ENCODE measurements at regions of chr17 and their contacts with region 1.

Region 1: DNA sequence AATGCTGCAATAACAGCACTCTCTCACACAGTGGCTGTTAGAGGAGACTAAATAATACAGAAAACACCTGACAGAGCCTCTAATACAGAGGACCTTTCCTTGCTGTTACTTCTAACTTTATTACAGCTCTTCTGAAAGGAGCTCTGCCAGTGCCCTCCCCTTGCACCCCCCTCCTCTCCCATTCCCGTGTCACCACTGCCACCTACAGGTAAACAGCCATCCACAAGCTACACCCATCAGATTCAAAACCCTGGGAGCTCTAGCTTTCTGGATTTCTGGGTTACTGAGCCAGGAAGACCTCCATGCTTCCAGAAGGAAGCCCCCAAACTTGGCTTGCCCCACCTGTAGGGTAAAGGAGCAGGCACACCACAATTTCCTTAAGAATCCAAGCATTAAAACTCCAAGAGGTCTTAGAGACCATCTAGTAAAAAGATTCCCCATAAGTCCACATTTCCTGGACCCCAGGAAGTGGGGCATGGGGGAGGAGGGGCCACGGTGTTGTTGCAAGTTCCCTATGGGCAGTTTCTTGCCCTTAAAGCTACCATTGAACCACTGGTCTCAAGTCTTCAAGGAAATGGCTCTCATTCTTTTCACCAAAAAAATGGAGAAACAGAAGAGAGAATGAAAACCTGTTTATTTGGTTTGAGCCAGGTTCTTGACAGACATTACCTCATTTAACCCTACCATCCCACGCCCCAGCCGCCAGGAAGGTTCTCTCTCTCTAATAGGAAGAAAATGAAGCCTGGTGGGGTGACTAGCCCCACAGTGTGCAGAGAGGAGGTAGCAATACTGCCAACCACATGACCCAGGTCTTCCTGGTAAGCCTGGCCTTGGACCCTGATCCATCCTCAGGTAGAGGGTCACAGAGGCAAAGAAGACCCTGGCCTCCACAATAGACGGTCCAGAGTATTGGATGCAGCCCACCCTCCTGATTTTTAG is 52.8 kb downstream of the TOM1L2 start:
- DNase-seq: peak; percentile 18 to 77 (median 67)
- ATAC-seq: peak; percentile 90
- H3K4me3 ChIP-seq: no peak overlapping the region
- H3K4me3 Mint-ChIP-seq: no peak overlapping the region
- H3K27ac ChIP-seq: no peak overlapping the region
- H3K27ac Mint-ChIP-seq: peak overlapping the region in 5 of 9 donors; percentile 17 to 49 (median 34)
- H3K4me1 ChIP-seq: peaks cover 0 to 6% of the 10 kb centered on the region in 2 donors
- H3K4me1 Mint-ChIP-seq: peaks cover 21 to 34% (median 26%) of the 10 kb centered on the region in 7 donors
- H3K27me3 ChIP-seq: no peaks in the 10 kb centered on the region
- H3K27me3 Mint-ChIP-seq: no peaks in the 10 kb centered on the region

Region 2: DNA sequence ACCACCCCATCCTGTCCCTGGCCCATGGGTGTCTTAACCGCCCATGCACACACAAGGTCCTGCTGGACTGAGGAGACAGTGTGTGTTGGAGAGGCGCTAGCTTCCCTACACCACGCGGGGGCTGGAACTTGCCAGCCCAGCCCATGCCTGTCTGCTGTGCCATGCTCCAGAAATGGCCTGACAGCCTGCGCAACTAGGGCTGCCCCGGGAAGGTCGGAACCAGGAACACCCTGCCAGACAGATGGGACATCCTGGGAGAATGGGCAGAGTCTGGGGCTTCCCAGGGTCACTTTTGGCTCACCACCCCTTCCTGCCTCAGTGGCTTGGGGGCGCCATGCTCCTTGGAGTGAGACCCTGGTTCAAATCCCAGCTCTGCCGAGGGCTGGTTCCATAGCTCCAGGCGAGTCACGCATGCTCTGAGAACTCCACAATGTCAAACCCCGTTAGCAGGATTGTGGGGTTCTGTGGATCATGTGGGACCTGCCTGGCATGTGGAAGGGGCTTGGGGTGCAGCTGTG is 118.9 kb before region 1 on chr17:
- CTCF ChIA-PET with region 1: no interaction called
- POLR2A ChIA-PET with region 1: no interaction called
- intact Hi-C with region 1: no loop called
- DNase-seq: no peak
- ATAC-seq: no peak
- H3K4me3 ChIP-seq: no peak overlapping the region
- H3K4me3 Mint-ChIP-seq: no peak overlapping the region
- H3K27ac ChIP-seq: no peak overlapping the region
- H3K27ac Mint-ChIP-seq: no peak overlapping the region
- H3K4me1 ChIP-seq: no peaks in the 10 kb centered on the region
- H3K4me1 Mint-ChIP-seq: peaks cover 0 to 6% (median 0%) of the 10 kb centered on the region in 7 donors
- H3K27me3 ChIP-seq: no peaks in the 10 kb centered on the region
- H3K27me3 Mint-ChIP-seq: no peaks in the 10 kb centered on the region

Region 3: GRCh38 chr17:17859909-17860765 is 59.3 kb before region 1 on chr17:
- CTCF ChIA-PET with region 1: interaction called, 8 read pairs
- POLR2A ChIA-PET with region 1: no interaction called
- intact Hi-C with region 1: loop called in 1 of 2 experiments (anchors 1 kb)
- DNase-seq: peak; percentile 50 to 77 (median 68)
- ATAC-seq: peak; percentile 97
- H3K4me3 ChIP-seq: no peak overlapping the region
- H3K4me3 Mint-ChIP-seq: no peak overlapping the region
- H3K27ac ChIP-seq: no peak overlapping the region
- H3K27ac Mint-ChIP-seq: peak overlapping the region in 3 of 9 donors; percentile 46 to 70 (median 58)
- H3K4me1 ChIP-seq: peaks cover 0 to 28% of the 10 kb centered on the region in 2 donors
- H3K4me1 Mint-ChIP-seq: peaks cover 13 to 67% (median 52%) of the 10 kb centered on the region in 7 donors
- H3K27me3 ChIP-seq: no peaks in the 10 kb centered on the region
- H3K27me3 Mint-ChIP-seq: no peaks in the 10 kb centered on the region

Region 4: DNA sequence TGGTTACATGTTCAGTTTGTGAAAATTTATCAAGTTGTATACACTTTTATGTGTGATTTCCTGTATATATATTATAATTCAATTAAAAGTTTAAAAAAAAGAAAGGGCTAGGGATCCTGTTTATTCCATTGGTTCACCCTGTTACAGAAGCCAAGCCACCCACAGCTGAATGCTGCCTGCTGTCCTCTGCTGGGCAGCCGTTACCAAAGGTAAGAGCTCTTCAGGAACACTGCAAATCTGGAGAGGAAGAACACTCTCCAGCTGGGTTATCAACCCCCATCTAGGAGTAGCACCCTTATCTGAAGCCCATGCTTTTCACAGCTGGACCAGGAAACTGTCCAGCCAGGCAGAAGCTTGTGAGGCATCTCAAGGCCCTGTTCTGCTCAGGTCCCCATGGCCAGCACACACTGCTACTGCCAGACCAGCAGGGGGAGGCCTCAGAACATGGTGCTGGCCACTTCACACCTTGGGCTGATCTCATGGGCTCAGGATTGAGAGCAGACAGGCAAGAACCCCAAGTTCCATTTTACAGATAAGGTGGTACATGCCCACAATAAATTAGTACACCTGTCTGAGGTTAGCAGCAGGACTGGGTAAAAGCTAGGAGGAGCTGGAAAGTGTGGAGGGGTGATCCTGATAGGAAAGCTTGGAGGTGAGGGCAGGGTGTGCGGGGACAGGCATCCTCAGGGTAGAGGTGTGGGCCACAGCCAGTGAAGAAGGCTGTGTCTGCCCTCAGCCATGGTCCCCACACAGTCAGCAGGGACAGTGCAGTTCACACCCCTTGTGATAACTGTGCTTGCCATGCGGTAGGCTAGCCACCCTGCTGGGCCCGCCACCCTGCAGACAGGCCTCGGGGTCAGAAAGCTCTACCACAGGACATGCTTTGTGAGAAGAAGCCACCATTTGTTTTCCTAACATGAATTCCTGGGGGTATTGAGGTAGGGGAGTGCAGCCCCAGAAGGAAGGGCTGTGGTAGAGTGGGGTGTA is 28.4 kb before region 1 on chr17:
- CTCF ChIA-PET with region 1: interaction called, 8 read pairs
- POLR2A ChIA-PET with region 1: interaction called, 3 read pairs
- intact Hi-C with region 1: loop called in 1 of 2 experiments (anchors 2 kb)
- DNase-seq: peak; percentile 26 to 60 (median 43)
- ATAC-seq: peak; percentile 83
- H3K4me3 ChIP-seq: no peak overlapping the region
- H3K4me3 Mint-ChIP-seq: no peak overlapping the region
- H3K27ac ChIP-seq: no peak overlapping the region
- H3K27ac Mint-ChIP-seq: peak overlapping the region in 7 of 9 donors; percentile 17 to 90 (median 54)
- H3K4me1 ChIP-seq: no peaks in the 10 kb centered on the region
- H3K4me1 Mint-ChIP-seq: peaks cover 3 to 21% (median 17%) of the 10 kb centered on the region in 7 donors
- H3K27me3 ChIP-seq: no peaks in the 10 kb centered on the region
- H3K27me3 Mint-ChIP-seq: no peaks in the 10 kb centered on the region

Region 5: DNA sequence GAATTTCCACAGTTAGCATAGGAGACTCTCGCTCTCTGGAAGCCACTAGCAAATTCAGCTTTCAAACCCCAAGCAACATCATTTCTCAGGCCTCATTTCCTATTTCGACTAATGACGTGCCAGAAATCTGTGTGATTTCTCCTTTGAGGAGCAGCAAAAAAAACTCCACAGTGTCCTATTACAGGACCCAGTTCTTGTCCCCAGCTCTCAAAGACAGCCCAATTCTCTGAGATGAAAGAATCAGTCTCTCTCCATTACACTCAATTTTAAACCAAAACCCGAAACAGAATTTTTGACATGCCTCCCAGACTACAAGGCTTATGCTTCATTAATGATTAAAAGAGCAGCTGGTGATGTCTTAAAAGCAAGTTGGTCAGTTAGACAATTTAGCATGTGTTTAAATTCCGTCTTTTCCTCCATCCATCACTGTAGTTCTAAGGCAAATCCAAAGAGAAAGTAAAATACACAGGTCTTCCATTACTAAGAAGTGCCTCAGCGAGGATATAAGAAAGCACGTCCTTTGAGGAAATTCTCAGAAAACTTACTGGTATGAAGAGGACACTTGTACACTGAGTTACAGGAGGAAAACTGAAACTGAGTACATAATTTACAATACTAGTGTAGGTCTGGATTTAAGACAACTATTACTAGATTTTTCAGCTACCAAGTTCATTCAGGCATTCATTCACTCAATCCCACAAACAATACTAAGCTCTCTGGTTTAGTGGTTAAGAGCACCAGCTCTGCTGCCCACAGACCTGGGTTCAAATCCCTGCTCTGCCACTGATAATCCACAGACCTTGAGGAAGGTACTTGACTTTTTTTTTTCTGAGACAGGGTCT is 40.3 kb after region 1 on chr17:
- CTCF ChIA-PET with region 1: interaction called, 4 read pairs
- POLR2A ChIA-PET with region 1: no interaction called
- intact Hi-C with region 1: loop called in 1 of 2 experiments (anchors 10 kb)
- DNase-seq: peak in 7 of 9 donors; percentile 10 to 44 (median 27)
- ATAC-seq: peak; percentile 38
- H3K4me3 ChIP-seq: peak overlapping the region; percentile 37
- H3K4me3 Mint-ChIP-seq: peak overlapping the region; percentile 60 to 94 (median 86)
- H3K27ac ChIP-seq: peak overlapping the region; percentile 79
- H3K27ac Mint-ChIP-seq: peak overlapping the region; percentile 93 to 100 (median 98)
- H3K4me1 ChIP-seq: peaks cover 26 to 64% of the 10 kb centered on the region in 2 donors
- H3K4me1 Mint-ChIP-seq: peaks cover 50 to 87% (median 76%) of the 10 kb centered on the region in 7 donors
- H3K27me3 ChIP-seq: no peaks in the 10 kb centered on the region
- H3K27me3 Mint-ChIP-seq: no peaks in the 10 kb centered on the region

Measured in naive thymus-derived CD4-positive, alpha-beta T cell (primary cell).